ENCODE measurements at regions of chr2 and their contacts with region 1.

Region 1: DNA sequence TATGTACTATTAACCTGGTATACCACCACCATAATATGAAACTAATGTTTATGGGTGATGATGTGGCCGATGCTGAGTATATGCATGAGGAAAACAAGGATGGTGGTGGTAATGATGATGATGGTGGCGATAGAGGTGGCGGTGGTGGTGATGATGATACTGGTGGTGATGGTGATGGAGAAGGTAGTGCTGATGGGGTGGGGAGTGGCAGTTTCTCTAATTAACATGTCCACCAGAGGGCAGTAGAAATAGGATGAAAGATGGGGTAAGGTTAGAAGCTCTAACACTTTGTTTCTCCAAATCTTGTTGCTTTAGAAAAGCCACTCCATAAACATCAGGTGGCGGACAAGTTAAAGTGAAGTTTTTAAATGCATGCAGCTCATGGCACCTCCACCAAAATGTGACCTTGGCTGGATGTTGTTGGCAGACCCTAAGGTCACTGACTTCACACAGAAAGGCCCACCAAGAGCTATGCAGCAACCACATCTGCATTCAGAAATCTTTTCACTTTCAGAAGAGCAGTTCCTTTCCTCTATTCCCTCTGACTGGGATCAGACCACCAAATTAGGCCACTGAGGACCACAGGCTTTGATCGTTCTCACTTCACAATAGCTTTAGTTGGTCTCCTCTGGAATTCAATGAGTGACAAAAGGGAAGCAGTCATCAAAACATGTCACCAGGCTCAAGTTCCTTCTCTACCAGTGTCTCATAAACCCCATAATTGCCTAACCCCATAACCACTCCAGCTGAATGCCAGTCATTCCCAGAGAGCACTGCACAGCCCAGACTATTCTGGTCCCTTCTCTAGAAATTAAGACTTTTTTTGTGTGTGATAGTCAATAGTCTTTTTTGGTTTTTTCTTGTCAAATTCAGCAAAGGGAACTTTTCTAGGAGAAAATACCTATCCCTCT is 7.5 kb upstream of the BCL11A start:
- DNase-seq: peak; percentile 20
- H3K4me3 Mint-ChIP-seq: no peak overlapping the region
- H3K27ac Mint-ChIP-seq: no peak overlapping the region
- H3K4me1 Mint-ChIP-seq: peaks cover 13% of the 10 kb centered on the region
- H3K27me3 Mint-ChIP-seq: peaks cover 60% of the 10 kb centered on the region

Region 2: GRCh38 chr2:60641811-60642788 is 81.1 kb after region 1 on chr2:
- CTCF ChIA-PET with region 1: no interaction called
- intact Hi-C with region 1: loop called (anchors 5 kb)
- DNase-seq: peak; percentile 41
- H3K4me3 Mint-ChIP-seq: no peak overlapping the region
- H3K27ac Mint-ChIP-seq: no peak overlapping the region
- H3K4me1 Mint-ChIP-seq: no peaks in the 10 kb centered on the region
- H3K27me3 Mint-ChIP-seq: no peaks in the 10 kb centered on the region

Measured in activated naive CD4-positive, alpha-beta T cell treated with anti-CD3 and anti-CD28 coated beads for 36 hours (primary cell).